Activated naive CD8-positive, alpha-beta T cell treated with anti-CD3 and anti-CD28 coated beads, Interleukin-2, amount 10 ng/mL, durations not matched to agents 7 days and 5 days (primary cell): ENCODE measurements at regions of chr19 and their contacts with region 1.

Region 1: GRCh38 chr19:10194500-10195289 is at the start of gene DNMT1:
- DNase-seq: peak; percentile 97
- ATAC-seq: peak; percentile 97
- H3K4me3 Mint-ChIP-seq: peak within 1 kb of the TSS; percentile 95
- H3K27ac Mint-ChIP-seq: peak within 1 kb of the TSS; percentile 94
- H3K4me1 Mint-ChIP-seq: peaks cover 32% of the 10 kb centered on the region
- H3K27me3 Mint-ChIP-seq: no peaks in the 10 kb centered on the region
- total RNA-seq, gene DNMT1: 347 to 384 TPM

Region 2: DNA sequence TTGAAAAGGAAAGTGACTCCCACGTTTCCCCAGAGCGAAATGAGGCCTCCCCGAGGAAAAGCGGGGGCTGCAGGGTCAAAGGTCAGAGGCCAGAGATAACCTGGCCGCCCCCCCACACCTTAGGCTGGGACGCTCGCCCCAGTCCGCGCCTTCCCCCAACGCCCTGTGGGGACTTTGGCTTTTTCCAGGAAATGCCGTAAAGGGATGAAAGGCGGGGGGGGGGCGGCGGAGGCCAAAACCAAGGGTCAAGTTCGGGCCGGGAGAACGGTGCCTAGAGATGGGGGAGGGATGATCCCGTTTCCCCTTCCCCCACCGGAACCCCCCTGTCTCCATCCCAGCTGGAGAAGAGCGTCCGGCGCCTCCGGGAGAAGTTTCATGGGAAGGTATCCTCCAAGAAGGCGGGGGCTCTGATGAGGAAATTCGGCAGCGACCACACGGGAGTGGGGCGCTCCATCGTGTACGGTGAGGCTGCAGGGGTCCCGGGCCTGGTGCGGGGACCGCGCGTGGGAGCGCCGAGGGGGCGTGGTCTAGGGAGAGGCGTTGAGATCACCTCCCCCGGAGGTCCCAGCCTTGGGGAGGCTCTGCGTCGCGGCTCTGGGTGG is 108.0 kb before region 1 on chr19:
- POLR2A ChIA-PET with region 1: no interaction called
- DNase-seq: peak; percentile 69
- ATAC-seq: peak; percentile 21
- H3K4me3 Mint-ChIP-seq: peak overlapping the region; percentile 91
- H3K27ac Mint-ChIP-seq: peak overlapping the region; percentile 77
- H3K4me1 Mint-ChIP-seq: peaks cover 19% of the 10 kb centered on the region
- H3K27me3 Mint-ChIP-seq: no peaks in the 10 kb centered on the region

Region 3: DNA sequence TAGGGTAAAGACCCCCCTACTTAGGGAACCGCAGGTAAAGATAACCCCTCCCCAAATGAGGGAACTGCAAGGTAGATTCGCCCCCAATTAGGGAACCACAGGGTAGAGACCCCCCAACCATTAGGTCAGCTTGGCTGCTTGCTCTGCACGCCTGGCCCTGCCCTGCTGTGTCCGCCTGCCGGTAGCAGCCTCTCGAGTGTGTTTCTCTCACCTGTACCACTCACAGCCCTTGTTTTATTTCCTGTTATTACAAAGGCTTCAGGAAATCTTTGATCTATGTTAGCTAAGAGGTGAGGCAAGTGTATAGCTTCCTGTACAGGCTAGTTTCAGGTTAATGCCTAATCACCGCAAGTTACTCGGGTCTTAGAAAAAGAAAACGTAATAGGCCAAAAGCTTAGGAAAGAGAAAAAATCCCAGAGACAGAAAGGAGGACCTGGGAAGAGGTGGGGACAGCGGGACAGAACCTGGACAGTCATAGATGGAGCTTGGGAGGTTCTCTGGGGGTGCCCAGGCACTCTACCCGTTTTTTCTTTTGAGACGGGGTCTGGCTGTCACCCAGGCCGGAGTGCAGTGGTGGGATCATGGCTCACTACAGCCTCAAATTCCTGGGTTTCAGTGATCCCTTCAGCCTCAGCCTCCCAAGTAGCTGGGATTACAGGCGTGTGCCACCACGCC is 51.9 kb before region 1 on chr19:
- POLR2A ChIA-PET with region 1: interaction called, 10 read pairs
- DNase-seq: peak; percentile 59
- ATAC-seq: peak; percentile 98
- H3K4me3 Mint-ChIP-seq: peak overlapping the region; percentile 75
- H3K27ac Mint-ChIP-seq: peak overlapping the region; percentile 98
- H3K4me1 Mint-ChIP-seq: peaks cover 28% of the 10 kb centered on the region
- H3K27me3 Mint-ChIP-seq: no peaks in the 10 kb centered on the region

Region 4: GRCh38 chr19:10251792-10252694 is 57.3 kb after region 1 on chr19 and contains the start of gene MRPL4:
- POLR2A ChIA-PET with region 1: interaction called, 11 read pairs
- DNase-seq: peak; percentile 94
- ATAC-seq: peak; percentile 99
- H3K4me3 Mint-ChIP-seq: peak within 1 kb of the TSS; percentile 94
- H3K27ac Mint-ChIP-seq: peak within 1 kb of the TSS; percentile 96
- H3K4me1 Mint-ChIP-seq: peaks cover 24% of the 10 kb centered on the region
- H3K27me3 Mint-ChIP-seq: no peaks in the 10 kb centered on the region
- total RNA-seq, gene MRPL4: 55.8 to 59.9 TPM